ENCODE measurements at regions of chr10 and their contacts with region 1.

Region 1: DNA sequence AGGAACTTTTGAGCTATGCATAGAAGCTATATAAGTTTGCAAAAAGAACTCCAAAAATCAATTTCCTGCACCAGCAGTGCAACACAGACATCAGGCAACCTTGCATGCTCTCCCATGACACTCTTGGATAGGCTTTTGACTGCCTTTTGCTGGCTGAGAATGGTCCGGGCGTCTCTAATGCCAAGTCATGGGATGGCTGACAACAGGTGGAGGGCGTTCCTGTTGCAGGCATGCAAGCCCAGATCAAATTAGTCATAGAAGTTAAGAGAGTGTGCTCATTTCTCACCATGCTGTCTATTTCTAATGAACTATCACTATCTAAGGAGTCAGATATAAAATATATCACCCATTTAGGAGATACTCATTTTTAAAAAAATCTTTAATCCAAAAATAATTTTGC is 8.4 kb downstream of the PLCE1 start:
- DNase-seq: peak; percentile 85 to 92
- ATAC-seq: peak; percentile 99
- H3K4me3 ChIP-seq: no peak overlapping the region
- H3K27ac ChIP-seq: peak overlapping the region; percentile 41 to 68 (median 46)
- H3K4me1 ChIP-seq: peaks cover 30 to 31% of the 10 kb centered on the region in 2 donors
- H3K27me3 ChIP-seq: no peaks in the 10 kb centered on the region
- CTCF ChIP-seq: no peak
- POLR2A ChIP-seq: no peak

Region 2: GRCh38 chr10:93947055-93947454 is 55.1 kb before region 1 on chr10:
- in situ Hi-C with region 1: no loop called
- intact Hi-C with region 1: loop called (anchors 2 kb)
- DNase-seq: peak; percentile 86 to 88
- ATAC-seq: peak; percentile 99
- H3K4me3 ChIP-seq: peak overlapping the region in 1 of 4 donors; percentile 23
- H3K27ac ChIP-seq: peak overlapping the region; percentile 78 to 88 (median 82)
- H3K4me1 ChIP-seq: peaks cover 31 to 37% of the 10 kb centered on the region in 2 donors
- H3K27me3 ChIP-seq: no peaks in the 10 kb centered on the region
- CTCF ChIP-seq: no peak
- POLR2A ChIP-seq: no peak

Region 3: DNA sequence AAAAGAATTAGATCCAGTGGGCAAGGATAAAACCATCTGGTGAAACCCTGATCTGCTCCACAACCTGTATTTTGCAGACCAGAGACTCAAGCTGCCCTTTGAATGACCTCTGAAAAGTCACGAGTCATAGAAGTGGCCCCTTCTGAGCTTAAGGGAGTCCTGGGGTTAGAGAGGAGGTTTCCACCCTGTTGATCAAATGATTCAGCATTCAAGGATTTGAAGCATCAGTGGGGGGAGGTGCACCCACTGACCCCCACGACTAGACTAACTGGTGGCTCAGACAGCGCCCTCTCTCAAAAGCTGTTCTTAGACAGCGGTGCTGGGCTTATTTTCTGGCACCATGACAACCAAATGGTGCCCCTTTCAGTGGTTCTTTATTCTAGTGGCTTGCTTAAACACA is 35.9 kb after region 1 on chr10:
- in situ Hi-C with region 1: no loop called
- intact Hi-C with region 1: no loop called
- DNase-seq: no peak
- ATAC-seq: no peak
- H3K4me3 ChIP-seq: no peak overlapping the region
- H3K27ac ChIP-seq: no peak overlapping the region
- H3K4me1 ChIP-seq: peaks cover 0 to 15% of the 10 kb centered on the region in 2 donors
- H3K27me3 ChIP-seq: no peaks in the 10 kb centered on the region
- CTCF ChIP-seq: no peak
- POLR2A ChIP-seq: no peak

Region 4: DNA sequence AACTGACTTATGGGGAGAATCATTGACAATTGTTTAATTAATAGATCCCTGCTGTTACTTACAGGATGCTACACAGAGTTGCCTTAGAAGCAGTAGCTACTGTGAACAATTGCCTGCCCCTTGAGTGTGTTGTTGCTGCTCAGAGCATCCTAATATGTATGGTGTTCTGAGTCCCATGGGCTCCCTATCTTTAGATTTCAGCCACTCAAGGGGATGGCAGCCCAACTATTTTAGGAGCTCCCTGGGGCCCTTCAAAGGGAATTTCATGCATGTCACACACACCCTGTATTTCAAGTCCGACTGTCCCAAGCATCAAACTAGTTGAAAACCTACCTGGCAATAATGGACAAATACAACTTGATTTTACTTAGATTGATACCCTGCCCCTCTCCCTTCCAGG is 249.4 kb after region 1 on chr10:
- in situ Hi-C with region 1: no loop called
- intact Hi-C with region 1: no loop called
- DNase-seq: no peak
- ATAC-seq: no peak
- H3K4me3 ChIP-seq: no peak overlapping the region
- H3K27ac ChIP-seq: no peak overlapping the region
- H3K4me1 ChIP-seq: no peaks in the 10 kb centered on the region
- H3K27me3 ChIP-seq: no peaks in the 10 kb centered on the region
- CTCF ChIP-seq: no peak
- POLR2A ChIP-seq: no peak

Region 5: GRCh38 chr10:94402015-94402842 is 400.1 kb after region 1 on chr10 and contains the start of gene TBC1D12:
- in situ Hi-C with region 1: no loop called
- intact Hi-C with region 1: loop called (anchors 5 kb)
- DNase-seq: peak; percentile 91 to 94
- ATAC-seq: peak; percentile 90 to 93
- H3K4me3 ChIP-seq: peak within 1 kb of the TSS; percentile 70 to 95 (median 82)
- H3K27ac ChIP-seq: peak within 1 kb of the TSS; percentile 87 to 97 (median 90)
- H3K4me1 ChIP-seq: peaks cover 21% of the 10 kb centered on the region in 2 donors
- H3K27me3 ChIP-seq: peaks cover 0 to 6% (median 3%) of the 10 kb centered on the region in 3 donors
- CTCF ChIP-seq: no peak
- POLR2A ChIP-seq: peak; percentile 78 to 82
- total RNA-seq, gene TBC1D12: 7.4 to 11.4 (median 7.8) TPM

Measured in gastrocnemius medialis (tissue), 4 donors.